Panc1 (cell line): ENCODE measurements at regions of chr12 and their contacts with region 1.

Region 1: GRCh38 chr12:56593909-56594621 is 36.1 kb downstream of the BAZ2A start:
- DNase-seq: peak; percentile 71
- ATAC-seq: peak; percentile 70
- H3K4me3 ChIP-seq: no peak overlapping the region
- H3K27ac ChIP-seq: no peak overlapping the region
- H3K4me1 ChIP-seq: no peaks in the 10 kb centered on the region; the same call in 1 of the 2 replicates
- H3K27me3 ChIP-seq: no peaks in the 10 kb centered on the region
- CTCF ChIP-seq: peak; percentile 91

Region 2: DNA sequence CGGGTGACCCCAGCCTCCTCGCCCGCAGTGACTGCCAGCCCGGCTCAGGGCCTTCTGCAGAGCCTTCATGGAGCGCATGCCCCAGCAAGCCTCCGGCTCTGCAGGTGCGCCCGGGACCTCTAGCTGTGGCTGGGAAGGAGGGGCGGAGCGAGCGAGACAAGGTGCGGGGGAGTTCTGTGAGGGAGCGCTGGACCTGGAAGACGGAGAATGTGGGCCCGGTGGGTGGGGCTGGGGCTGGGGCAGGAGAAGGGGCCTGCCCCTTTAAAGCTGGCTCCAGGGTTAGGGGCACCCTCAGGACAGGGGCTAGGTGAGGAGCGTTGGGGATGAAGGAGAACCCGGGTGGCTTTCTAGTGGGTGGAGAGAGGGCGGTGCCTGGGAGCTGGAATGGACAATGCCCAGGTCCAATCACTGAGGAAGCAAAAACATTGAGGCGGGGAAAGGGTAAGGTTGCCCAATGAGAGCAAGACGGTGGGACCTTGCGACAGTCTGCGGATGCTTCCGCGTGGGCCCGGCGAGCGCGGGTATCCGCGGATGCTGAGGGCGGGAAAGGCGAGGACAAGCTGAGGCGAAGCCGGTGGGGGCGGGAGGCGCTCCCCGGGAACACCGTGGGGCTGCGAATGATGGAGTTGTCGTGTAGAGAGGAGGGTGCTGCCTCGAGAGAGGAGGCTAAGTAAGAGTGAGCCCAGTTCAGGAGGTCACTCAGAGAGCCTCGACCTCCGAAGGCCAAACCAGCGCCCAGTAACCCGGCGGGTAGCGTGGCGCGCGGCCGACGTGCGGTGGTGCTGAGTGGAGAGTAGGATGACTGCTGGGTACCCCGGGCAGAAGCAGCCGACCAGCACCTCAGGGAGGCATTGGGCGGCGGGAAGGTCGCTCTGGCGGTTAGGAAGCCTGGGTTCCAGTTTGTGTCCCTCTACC is 105.8 kb before region 1 on chr12 and contains the start of gene GLS2:
- CTCF ChIA-PET with region 1: interaction called, 14 read pairs
- POLR2A ChIA-PET with region 1: no interaction called
- in situ Hi-C with region 1: no loop called
- intact Hi-C with region 1: no loop called
- DNase-seq: peak; percentile 56
- ATAC-seq: peak; percentile 95
- H3K4me3 ChIP-seq: peak within 1 kb of the TSS; percentile 55 to 64
- H3K27ac ChIP-seq: no peak within 1 kb of the TSS
- H3K4me1 ChIP-seq: 0 out of 2 replicates have a peak, but pooled peaks cover 7% of the 10 kb centered on the region
- H3K27me3 ChIP-seq: peaks cover 18% of the 10 kb centered on the region
- CTCF ChIP-seq: no peak
- total RNA-seq, gene GLS2: 1.3 TPM